Activated T-helper 1 cell treated with anti-CD3 and anti-CD28 coated beads, Interleukin-12 subunit alpha, Interleukin-12 subunit beta, Interleukin-2, Interleukin-4 antibody, amounts not matched to agents 30 ng/mL and 10 ng/mL and 1 ng/mL, durations not matched to agents 14 hours and 24 hours and 36 hours (primary cell): ENCODE measurements at regions of chr2 and their contacts with region 1.

Region 1: DNA sequence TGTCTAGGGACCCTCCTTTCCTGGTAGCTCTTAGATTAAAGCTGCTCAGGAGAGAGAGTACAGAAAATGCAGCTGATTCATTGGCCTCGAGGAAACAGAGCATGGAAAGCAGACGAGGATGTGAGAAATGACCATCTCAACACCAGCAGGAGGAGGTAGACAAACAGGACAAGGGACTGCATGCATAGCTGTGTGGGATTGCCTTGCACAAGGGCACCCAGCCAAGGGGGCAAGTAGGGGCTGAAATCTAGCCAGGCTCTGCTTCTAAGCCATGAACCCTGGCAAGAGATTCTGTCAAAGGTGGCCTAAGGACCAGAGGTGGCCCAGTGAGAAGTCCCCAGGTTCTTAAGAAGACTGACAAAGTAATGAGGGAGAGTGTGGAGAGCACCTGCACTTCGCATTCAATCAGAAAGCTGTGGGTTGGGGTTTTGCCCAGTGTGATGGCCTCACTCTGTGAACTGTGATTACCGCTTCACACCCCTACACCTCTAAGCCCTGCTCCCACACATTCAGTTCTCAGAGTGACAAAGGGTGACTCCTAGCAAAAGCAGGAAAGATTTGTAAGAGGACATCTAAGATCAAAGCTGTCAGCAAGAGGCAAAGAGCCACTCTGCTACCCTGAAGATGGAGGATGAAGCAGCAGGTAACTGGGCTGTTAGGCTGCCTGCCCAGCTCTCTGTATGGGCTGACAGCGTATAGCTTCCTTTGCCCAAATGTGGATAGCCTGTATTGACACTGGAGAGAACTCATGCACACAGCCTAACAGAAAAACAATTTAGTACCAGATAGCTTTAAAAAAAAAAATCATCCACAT is 151.3 kb upstream of the PELI1 start:
- DNase-seq: peak; percentile 23
- H3K4me3 Mint-ChIP-seq: no peak overlapping the region
- H3K27ac Mint-ChIP-seq: peak overlapping the region; percentile 59
- H3K4me1 Mint-ChIP-seq: peaks cover 34% of the 10 kb centered on the region
- H3K27me3 Mint-ChIP-seq: peaks cover 12% of the 10 kb centered on the region

Region 2: DNA sequence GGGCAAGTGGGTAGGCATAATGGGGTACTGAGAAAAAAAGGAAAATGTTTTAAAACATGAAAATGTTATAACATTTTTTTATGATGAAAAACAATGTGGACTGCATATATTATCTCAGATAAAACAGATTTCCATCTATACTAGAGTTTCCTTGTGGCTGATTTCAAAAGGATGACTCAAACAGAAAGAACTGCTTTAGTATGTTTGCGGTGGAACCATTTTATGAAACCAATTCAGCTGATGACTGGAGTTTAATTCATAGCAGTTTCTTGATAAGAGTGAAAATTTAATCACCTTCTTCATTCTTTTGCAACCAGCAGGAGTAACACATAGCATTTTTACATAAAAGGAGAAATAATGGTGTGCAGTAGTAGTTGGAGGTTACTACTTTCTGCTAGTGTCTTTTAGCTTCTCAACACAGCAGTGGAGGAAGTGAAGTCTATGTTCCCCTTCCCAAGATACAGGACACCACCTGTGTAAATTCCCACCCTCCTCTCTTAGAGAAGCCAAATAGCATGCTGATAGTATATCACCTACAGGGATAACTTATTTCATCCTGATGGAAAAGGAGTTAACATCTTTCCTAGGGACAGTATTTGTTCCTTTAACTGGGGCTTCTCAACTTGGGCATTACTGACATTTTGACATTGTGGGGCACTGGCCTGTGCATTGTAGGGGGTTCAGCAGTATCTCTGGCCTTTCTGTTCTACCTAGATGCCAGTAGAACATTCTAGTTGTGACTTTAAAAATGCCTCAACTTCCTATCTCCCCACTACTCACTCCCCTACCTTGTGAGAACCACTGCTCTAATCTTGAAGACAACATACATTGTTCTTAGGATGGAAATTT is 181.2 kb before region 1 on chr2:
- intact Hi-C with region 1: loop called (anchors 1 kb)
- DNase-seq: no peak
- H3K4me3 Mint-ChIP-seq: peak overlapping the region; percentile 17
- H3K27ac Mint-ChIP-seq: peak overlapping the region; percentile 59
- H3K4me1 Mint-ChIP-seq: peaks cover 73% of the 10 kb centered on the region
- H3K27me3 Mint-ChIP-seq: no peaks in the 10 kb centered on the region

Region 3: GRCh38 chr2:64133828-64134227 is 161.7 kb before region 1 on chr2:
- intact Hi-C with region 1: loop called (anchors 2 kb)
- DNase-seq: no peak
- H3K4me3 Mint-ChIP-seq: peak overlapping the region; percentile 39
- H3K27ac Mint-ChIP-seq: peak overlapping the region; percentile 88
- H3K4me1 Mint-ChIP-seq: peaks cover 90% of the 10 kb centered on the region
- H3K27me3 Mint-ChIP-seq: no peaks in the 10 kb centered on the region

Region 4: DNA sequence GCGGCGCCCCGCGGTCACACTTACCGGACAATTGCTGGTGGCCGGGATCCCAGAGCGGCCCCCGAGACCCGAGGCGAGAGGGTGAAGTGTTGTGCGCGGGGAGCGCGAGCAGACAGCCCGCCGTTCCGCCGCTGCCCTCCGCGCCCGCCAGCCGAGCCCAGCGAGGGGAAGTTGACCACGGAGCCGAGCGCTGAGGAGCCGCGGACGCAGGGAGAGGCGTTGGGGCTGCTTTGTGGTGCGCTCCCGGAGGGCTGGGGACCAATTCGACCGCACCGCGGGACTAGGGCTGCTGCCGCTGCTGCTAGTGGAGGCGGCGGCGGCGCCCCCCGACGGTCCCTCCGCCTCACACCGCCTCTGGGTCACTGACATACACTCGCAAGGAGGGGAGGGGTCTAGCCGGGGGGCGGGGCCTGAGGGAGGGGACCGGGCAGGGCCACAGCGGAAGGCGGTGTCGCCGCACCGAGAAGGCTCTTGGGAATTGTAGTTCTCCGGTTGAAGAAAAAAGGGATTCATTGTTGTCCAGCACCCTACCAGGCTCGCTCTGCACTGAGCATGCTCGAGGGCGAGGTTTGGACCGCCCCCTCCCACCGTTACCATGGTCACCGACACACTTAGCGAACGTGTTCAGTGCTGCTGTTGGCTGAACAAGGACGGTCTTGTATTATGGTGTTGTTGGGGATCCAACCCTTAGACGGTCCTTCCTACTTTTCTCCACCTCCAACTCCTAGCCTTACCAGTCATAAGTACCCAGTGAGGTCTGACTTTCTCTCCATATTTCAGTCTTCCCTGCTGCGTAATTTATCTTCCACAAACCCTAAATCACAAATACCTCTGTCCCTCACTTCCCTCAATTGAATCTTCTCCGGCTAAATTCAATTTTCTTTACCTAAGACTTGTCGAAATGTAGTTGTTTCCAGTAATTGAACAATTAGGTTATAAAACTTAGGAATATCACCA is 151.2 kb before region 1 on chr2 and contains the start of gene PELI1:
- intact Hi-C with region 1: loop called (anchors 1 kb)
- DNase-seq: peak; percentile 90
- H3K4me3 Mint-ChIP-seq: peak within 1 kb of the TSS; percentile 98
- H3K27ac Mint-ChIP-seq: peak within 1 kb of the TSS; percentile 97
- H3K4me1 Mint-ChIP-seq: peaks cover 28% of the 10 kb centered on the region
- H3K27me3 Mint-ChIP-seq: peaks cover 3% of the 10 kb centered on the region
- total RNA-seq, gene PELI1: 47.1 and 50.4 TPM in 2 replicates

Region 5: GRCh38 chr2:64165706-64166105 is 129.8 kb before region 1 on chr2:
- intact Hi-C with region 1: loop called (anchors 2 kb)
- DNase-seq: no peak
- H3K4me3 Mint-ChIP-seq: no peak overlapping the region
- H3K27ac Mint-ChIP-seq: no peak overlapping the region
- H3K4me1 Mint-ChIP-seq: no peaks in the 10 kb centered on the region
- H3K27me3 Mint-ChIP-seq: no peaks in the 10 kb centered on the region

Region 6: GRCh38 chr2:64228126-64228678 is 67.3 kb before region 1 on chr2:
- intact Hi-C with region 1: loop called (anchors 1 kb)
- DNase-seq: peak; percentile 54
- H3K4me3 Mint-ChIP-seq: peak overlapping the region; percentile 80
- H3K27ac Mint-ChIP-seq: peak overlapping the region; percentile 86
- H3K4me1 Mint-ChIP-seq: peaks cover 44% of the 10 kb centered on the region
- H3K27me3 Mint-ChIP-seq: peaks cover 7% of the 10 kb centered on the region

Region 7: GRCh38 chr2:64978514-64979268 is 683.2 kb after region 1 on chr2:
- intact Hi-C with region 1: loop called (anchors 5 kb)
- DNase-seq: no peak
- H3K4me3 Mint-ChIP-seq: no peak overlapping the region
- H3K27ac Mint-ChIP-seq: no peak overlapping the region
- H3K4me1 Mint-ChIP-seq: peaks cover 35% of the 10 kb centered on the region
- H3K27me3 Mint-ChIP-seq: peaks cover 2% of the 10 kb centered on the region